Vagina (tissue), 2 donors: ENCODE measurements at regions of chr17 and their contacts with region 1.

Region 1: DNA sequence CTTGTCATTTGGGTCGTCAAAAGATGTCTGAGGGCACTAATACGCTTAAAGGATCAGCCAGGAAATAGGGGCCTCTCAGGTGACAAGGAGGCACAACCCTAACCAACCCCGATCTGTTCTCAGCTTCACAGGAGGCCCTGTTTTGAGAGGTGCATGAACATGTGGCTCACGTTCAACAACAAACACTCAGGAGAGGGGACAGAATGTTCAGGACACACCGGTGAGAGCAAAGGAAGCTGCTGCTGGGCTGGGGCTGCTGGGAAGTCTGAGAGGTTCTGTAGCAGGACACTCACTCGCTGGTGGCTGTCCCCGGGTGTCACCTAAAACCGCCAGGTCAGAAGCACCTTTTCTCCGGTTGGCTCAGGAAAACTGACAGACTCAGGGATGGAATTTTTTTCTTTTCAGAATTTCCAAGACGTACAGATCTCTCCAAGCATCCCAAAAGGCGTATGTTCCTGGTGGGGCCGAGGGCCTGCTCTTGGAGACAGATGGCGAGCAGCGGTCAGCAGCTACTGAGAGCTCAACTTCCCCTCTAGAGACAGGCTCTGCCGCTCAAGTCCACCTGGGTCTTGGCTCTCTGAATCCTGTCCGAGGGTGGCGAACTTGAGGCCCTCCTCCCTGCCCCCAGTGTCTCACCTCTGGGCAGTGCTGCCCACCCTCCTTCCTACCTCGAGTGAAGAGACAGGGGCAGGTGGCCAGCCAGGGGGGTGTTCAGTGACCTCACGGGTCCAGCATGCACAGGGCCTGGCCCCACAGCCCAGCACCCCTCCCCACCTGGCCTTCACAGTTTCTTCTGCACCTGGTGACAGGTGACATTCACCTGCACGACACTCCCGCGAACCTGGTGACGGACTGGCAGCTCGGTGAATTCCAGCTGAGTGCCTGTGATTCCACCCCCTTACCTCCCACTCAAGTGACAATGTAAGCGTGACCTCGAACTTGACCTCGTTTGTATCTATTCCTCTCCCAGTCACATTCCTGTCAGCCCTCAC is 22.9 kb downstream of the CLUH start:
- DNase-seq: peak in 1 of 2 donors; percentile 84
- H3K4me3 ChIP-seq: no peak overlapping the region
- H3K27ac ChIP-seq: no peak overlapping the region
- H3K4me1 ChIP-seq: peaks cover 20% of the 10 kb centered on the region
- H3K27me3 ChIP-seq: no peaks in the 10 kb centered on the region
- CTCF ChIP-seq: no peak
- POLR2A ChIP-seq: no peak

Region 2: DNA sequence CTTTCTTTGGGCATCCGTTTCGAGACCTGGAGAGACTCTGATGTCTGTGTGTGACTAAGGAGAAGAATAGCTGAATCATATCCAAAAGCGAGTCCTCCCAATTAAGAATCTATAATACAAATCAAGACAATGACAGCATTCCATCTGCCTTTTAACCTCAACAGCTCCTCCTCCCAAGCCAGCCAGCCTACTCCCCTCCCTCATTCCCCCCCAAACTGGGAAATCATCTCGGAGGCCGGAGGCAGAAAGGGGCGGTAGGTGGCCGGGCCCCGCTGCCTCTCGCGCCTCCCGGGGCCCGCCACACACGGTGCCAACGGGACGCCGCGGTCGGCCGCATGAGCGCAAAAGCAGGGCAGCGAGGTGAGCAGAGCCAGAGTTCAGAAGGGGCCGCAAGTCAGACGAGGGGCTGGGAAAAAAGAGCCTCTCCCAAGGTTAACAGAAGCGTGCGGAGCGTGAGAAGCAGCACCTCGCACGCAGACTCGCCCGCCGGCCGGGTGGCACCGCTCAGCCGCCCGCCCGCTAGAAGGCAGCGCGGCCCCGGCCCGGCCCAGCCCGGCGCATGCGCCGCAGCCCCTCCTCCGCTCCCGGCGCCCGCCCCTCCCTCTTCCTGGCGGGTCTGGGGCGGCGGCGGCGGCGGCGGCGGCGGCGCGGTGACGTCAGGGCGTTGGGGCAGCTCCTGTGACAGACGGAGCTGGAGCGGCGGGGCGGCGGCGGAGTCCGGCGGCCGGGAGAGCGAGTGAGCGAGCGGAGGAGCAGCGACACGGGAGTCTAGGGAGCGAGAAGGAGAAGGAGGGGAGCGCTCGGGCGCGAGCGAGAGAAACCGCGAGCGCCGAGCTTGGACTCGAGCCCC is 95.5 kb before region 1 on chr17 and contains the start of gene PAFAH1B1:
- intact Hi-C with region 1: loop called (anchors 10 kb)
- DNase-seq: no peak
- H3K4me3 ChIP-seq: peak within 1 kb of the TSS; percentile 80 to 91
- H3K27ac ChIP-seq: peak within 1 kb of the TSS; percentile 99
- H3K4me1 ChIP-seq: peaks cover 35% of the 10 kb centered on the region
- H3K27me3 ChIP-seq: no peaks in the 10 kb centered on the region
- CTCF ChIP-seq: peak in 2 of 3 experiments; percentile 9 to 36
- POLR2A ChIP-seq: peak in 1 of 2 donors; percentile 93
- total RNA-seq, gene PAFAH1B1: 102 TPM

Region 3: DNA sequence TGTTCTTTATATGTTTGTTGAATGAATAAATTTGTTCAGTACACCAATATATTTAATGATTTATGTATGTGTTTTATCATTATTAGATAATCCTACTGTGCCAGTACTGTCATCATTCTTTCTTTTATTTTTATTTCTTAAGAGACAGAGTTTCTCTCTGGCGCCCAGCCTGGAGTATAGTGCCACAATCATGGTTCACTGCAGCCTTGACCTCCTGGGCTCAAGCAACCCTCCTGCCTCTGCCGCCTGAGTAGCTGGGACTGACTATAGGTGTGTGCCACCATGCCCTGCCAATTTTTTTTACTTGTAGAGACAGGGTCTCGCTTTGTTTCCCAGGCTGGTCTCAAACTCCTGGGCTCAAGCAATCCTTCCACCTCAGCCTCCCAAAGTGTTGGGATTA is 53.4 kb before region 1 on chr17:
- intact Hi-C with region 1: no loop called
- DNase-seq: no peak
- H3K4me3 ChIP-seq: no peak overlapping the region
- H3K27ac ChIP-seq: no peak overlapping the region
- H3K4me1 ChIP-seq: peaks cover 61% of the 10 kb centered on the region
- H3K27me3 ChIP-seq: no peaks in the 10 kb centered on the region
- CTCF ChIP-seq: no peak
- POLR2A ChIP-seq: no peak

Region 4: DNA sequence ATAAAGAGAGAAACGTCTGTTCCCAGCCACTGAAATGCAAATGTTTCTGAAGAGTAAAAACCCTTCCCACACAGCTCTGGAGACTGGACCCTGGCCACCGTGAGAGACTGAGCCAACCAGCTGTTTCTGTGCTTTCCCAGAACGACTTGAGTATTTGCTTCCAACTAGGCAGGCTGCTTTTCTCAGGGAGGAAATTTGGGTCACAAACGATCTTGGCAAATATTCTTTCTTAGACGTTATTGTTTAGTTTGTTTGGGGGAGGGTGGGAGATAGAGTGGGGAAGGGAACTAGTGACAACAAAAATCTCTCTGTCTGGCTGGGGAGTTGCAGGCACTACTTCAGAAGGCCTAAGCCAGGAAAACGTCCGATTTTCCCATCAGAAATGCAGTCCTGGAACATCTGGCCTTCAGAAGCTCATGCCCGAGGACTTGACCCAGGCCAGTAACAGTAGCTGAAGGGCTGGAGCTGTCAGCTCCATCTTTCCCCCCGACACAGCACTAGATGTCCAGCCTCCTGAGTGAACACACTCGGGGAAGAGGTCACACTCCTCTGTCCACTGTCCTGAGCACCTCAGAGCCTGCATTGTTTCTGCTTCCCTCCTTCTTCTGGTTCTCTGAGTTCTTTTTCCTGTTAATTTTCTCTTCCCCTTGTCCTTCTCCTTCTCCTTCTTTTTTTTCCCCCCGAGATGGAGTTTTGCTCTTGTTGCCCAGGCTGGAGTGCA is 56.8 kb after region 1 on chr17:
- intact Hi-C with region 1: no loop called
- DNase-seq: no peak
- H3K4me3 ChIP-seq: no peak overlapping the region
- H3K27ac ChIP-seq: no peak overlapping the region
- H3K4me1 ChIP-seq: peaks cover 5% of the 10 kb centered on the region
- H3K27me3 ChIP-seq: no peaks in the 10 kb centered on the region
- CTCF ChIP-seq: no peak
- POLR2A ChIP-seq: no peak